ENCODE measurements at regions of chr4 and their contacts with region 1.

Region 1: GRCh38 chr4:53804719-53805118 is 213.4 kb upstream of the LNX1 start:
- DNase-seq: peak in 4 of 10 donors; percentile 25 to 83 (median 47)

Region 2: DNA sequence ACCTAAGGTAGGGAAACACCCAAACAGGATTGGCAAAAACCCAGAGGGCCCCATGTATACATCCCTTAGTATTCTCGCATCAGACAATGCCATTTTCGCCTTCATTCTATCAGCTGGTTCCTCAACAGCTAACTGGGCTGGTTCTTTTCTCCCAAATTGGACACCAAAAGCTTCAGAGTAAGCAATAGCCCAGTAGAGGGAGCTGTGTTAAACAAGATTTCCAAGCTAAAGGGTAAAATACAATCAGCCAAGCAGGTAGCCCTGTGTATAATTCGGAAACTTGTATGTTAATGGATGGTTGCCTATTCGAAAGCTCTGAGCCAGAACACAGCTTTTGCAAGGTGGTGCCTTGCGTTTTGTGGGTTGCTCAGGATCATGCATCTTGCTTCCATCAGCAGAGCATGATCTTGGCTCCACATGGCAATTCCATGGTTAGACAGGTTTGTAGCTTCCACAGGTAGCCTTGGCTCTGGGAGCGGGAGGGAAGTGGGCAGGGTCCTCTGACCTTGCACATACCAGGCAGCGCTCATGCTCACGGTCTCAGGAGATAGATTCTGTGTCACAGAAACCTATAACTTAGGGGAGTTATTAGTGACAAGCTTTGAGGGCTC is 98.2 kb before region 1 on chr4:
- intact Hi-C with region 1: loop called (anchors 5 kb)
- DNase-seq: no peak

Region 3: DNA sequence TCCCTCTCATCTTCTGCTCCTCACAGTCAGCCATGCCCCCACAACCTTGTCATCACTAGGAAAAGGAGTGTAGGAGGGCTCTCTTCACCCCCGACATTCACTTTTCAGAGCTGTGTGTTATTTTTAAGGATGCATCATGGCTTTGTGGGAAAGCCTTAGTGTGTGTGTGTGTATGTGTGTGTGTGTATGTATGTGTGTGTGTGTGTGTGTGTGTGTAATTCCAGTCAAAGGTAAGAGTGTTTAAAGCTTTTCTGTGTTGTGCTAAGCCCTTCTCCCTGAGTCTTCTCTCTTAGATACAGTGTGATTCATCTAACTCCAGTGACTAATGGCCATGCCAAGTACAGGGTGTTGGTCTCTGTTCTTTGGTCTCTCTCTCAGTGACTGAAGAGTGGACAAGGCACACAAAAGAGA is 183.0 kb after region 1 on chr4:
- intact Hi-C with region 1: no loop called
- DNase-seq: no peak

Measured in posterior cingulate gyrus (tissue), 11 donors.